Endothelial cell of umbilical vein (primary cell): ENCODE measurements at regions of chr10 and their contacts with region 1.

Region 1: GRCh38 chr10:28532383-28533175 is at the start of gene WAC:
- DNase-seq: peak; percentile 94
- H3K4me3 ChIP-seq: peak within 1 kb of the TSS; percentile 94 to 100 (median 100)
- H3K27ac ChIP-seq: peak within 1 kb of the TSS; percentile 89
- H3K4me1 ChIP-seq: peaks cover 19% of the 10 kb centered on the region
- H3K27me3 ChIP-seq: no peaks in the 10 kb centered on the region
- CTCF ChIP-seq: no peak
- POLR2A ChIP-seq: no peak
- total RNA-seq, gene WAC: 101 and 104 TPM in 2 replicates

Region 2: GRCh38 chr10:28432210-28432676 is 100.3 kb before region 1 on chr10:
- CTCF ChIA-PET with region 1: interaction called, 3 read pairs
- POLR2A ChIA-PET with region 1: no interaction called
- dilution Hi-C with region 1: no loop called
- intact Hi-C with region 1: loop called (anchors 1 kb)
- DNase-seq: peak; percentile 65
- H3K4me3 ChIP-seq: no peak overlapping the region
- H3K27ac ChIP-seq: no peak overlapping the region
- H3K4me1 ChIP-seq: no peaks in the 10 kb centered on the region
- H3K27me3 ChIP-seq: peaks cover 1% of the 10 kb centered on the region in 2 experiments
- CTCF ChIP-seq: peak; percentile 69 to 76
- POLR2A ChIP-seq: no peak

Region 3: GRCh38 chr10:28479425-28479865 is 53.1 kb before region 1 on chr10:
- CTCF ChIA-PET with region 1: no interaction called
- POLR2A ChIA-PET with region 1: no interaction called
- dilution Hi-C with region 1: no loop called
- intact Hi-C with region 1: no loop called
- DNase-seq: no peak
- H3K4me3 ChIP-seq: no peak overlapping the region
- H3K27ac ChIP-seq: no peak overlapping the region
- H3K4me1 ChIP-seq: no peaks in the 10 kb centered on the region
- H3K27me3 ChIP-seq: no peaks in the 10 kb centered on the region
- CTCF ChIP-seq: no peak
- POLR2A ChIP-seq: no peak

Region 4: GRCh38 chr10:28551086-28551485 is 18.5 kb after region 1 on chr10:
- CTCF ChIA-PET with region 1: interaction called, 5 read pairs
- POLR2A ChIA-PET with region 1: interaction called, 10 read pairs
- dilution Hi-C with region 1: no loop called
- intact Hi-C with region 1: no loop called
- DNase-seq: peak; percentile 62
- H3K4me3 ChIP-seq: no peak overlapping the region
- H3K27ac ChIP-seq: peak overlapping the region; percentile 44
- H3K4me1 ChIP-seq: peaks cover 25% of the 10 kb centered on the region
- H3K27me3 ChIP-seq: no peaks in the 10 kb centered on the region
- CTCF ChIP-seq: no peak
- POLR2A ChIP-seq: no peak

Region 5: DNA sequence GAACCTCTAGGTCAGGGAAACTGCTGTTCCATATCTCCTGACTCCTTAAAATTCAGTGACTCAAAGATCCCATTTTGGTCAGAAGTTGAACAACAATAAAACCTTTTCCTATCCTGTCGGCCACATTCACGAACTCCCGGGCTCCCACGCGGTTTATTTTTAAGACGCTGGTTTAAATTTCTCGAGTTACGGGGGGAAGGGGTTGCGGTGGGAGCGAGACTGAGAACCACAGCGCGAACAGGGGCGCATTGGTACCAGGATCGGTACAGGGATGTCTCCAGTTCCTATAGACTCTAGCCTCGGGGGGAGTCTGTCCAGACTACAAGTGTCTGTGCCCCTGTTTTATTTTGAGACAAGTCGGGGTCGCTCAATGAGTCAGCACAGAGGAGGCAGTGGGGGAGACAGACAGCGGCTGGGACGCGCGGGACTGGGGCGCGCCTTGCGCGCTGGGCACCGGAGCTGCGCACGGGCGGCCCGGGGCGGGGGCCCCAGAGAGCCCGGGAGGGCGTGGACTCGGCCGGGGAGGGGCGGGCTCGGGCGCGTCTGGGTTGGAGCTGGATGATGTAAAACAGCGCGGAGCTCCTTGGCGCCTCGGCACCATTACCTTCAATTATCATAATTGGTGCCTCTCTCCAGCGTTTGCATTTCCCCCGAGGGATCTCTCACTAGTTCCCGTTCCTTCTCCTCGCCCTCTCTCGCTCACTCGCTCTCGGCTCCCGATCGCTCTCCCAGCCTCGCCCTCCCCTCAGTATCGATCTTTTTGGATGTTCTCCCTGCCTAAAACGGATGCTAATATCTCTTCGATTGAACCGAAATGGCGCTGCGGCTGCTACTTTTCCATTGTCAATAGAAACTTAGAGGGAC is 136.0 kb after region 1 on chr10:
- CTCF ChIA-PET with region 1: no interaction called
- POLR2A ChIA-PET with region 1: no interaction called
- dilution Hi-C with region 1: no loop called
- intact Hi-C with region 1: no loop called
- DNase-seq: peak; percentile 20
- H3K4me3 ChIP-seq: peak overlapping the region in 2 of 3 experiments; percentile 20 to 32
- H3K27ac ChIP-seq: no peak overlapping the region
- H3K4me1 ChIP-seq: no peaks in the 10 kb centered on the region
- H3K27me3 ChIP-seq: peaks cover 28 to 36% of the 10 kb centered on the region in 2 experiments
- CTCF ChIP-seq: no peak
- POLR2A ChIP-seq: no peak

Region 6: GRCh38 chr10:28947171-28947570 is 414.6 kb after region 1 on chr10:
- CTCF ChIA-PET with region 1: no interaction called
- POLR2A ChIA-PET with region 1: no interaction called
- dilution Hi-C with region 1: no loop called
- intact Hi-C with region 1: no loop called
- DNase-seq: peak; percentile 9
- H3K4me3 ChIP-seq: no peak overlapping the region
- H3K27ac ChIP-seq: no peak overlapping the region
- H3K4me1 ChIP-seq: no peaks in the 10 kb centered on the region
- H3K27me3 ChIP-seq: peaks cover 3 to 11% of the 10 kb centered on the region in 2 experiments
- CTCF ChIP-seq: no peak
- POLR2A ChIP-seq: no peak